Activated CD8-positive, alpha-beta T cell treated with anti-CD3 and anti-CD28 coated beads, Interleukin-2, amount 10 ng/mL, durations not matched to agents 7 days and 5 days (primary cell): ENCODE measurements at regions of chr15 and their contacts with region 1.

Region 1: DNA sequence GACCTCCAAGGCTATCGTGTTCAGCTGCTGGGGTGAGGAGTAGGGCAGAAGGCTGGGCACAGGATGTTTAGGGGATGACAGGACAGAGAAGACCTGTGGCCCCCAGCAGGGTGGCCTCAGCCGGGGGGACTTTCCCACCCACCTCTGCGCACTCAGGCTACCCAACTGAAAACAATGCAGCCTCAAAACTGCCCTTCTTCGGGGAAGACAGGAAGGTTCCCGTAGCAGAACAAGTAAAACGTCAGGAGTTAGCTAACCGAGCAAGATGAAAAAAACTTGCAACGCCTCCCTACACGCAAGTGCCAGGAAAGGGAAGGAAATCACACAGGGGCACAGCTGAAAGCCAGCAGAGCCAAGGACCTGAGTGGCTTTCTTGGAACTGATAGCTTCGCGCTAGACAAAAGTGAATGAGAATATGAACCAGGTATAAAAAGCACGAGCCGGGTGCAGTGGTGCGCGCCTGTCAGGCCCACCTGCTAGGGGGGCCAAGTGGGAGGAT is 38.4 kb upstream of the FURIN start:
- DNase-seq: peak; percentile 67
- ATAC-seq: peak; percentile 86
- H3K4me3 Mint-ChIP-seq: peak overlapping the region; percentile 62
- H3K27ac Mint-ChIP-seq: peak overlapping the region; percentile 95
- H3K4me1 Mint-ChIP-seq: peaks cover 72% of the 10 kb centered on the region
- H3K27me3 Mint-ChIP-seq: no peaks in the 10 kb centered on the region

Region 2: DNA sequence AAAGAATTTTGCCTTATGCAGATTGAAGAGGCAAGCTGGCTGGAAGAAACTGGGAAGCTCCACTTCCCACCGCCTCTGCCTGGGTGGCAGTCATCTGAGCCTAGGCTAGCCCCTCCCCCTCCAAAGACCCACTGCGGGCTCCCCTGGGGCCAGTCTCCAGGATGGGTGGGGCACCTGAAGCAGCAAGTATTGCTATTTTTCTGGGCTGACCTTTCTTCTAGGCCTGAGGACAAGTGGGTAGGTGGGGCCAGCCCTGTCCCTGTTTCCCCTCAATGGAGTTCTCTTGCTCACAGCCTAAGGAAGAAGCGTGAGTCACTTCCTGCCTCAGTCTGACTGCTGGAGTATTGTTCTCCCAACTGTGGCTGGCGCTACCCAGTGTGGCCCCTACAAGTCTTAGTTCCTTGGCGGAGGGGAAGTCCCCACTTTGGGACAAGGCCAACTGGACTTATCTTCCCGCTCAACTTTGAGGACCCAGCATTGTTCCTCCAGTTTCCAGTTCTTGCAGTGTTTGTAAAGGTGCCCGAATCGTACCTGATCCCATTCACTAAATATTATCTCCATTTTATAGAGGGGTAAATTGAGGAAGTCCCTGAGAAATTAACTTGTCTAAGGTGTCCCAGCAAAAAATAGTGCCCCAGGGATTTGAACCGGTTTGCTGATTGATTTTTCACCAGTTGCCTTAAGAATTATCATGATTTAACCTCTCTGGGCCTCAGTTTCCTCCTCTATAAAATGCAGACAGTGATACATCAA is 39.8 kb after region 1 on chr15:
- CTCF ChIA-PET with region 1: interaction called, 4 read pairs
- POLR2A ChIA-PET with region 1: interaction called, 13 read pairs
- DNase-seq: peak; percentile 54
- ATAC-seq: peak; percentile 37
- H3K4me3 Mint-ChIP-seq: peak overlapping the region; percentile 89
- H3K27ac Mint-ChIP-seq: peak overlapping the region; percentile 94
- H3K4me1 Mint-ChIP-seq: peaks cover 56% of the 10 kb centered on the region
- H3K27me3 Mint-ChIP-seq: no peaks in the 10 kb centered on the region